ENCODE measurements at regions of chr10 and their contacts with region 1.

Region 1: GRCh38 chr10:490891-491581 is 198.4 kb downstream of the DIP2C start:
- DNase-seq: no peak
- H3K4me3 ChIP-seq: no peak overlapping the region
- H3K27ac ChIP-seq: peak overlapping the region; percentile 46 to 48
- H3K4me1 ChIP-seq: no peaks in the 10 kb centered on the region
- H3K27me3 ChIP-seq: no peaks in the 10 kb centered on the region
- CTCF ChIP-seq: no peak
- POLR2A ChIP-seq: no peak

Region 2: DNA sequence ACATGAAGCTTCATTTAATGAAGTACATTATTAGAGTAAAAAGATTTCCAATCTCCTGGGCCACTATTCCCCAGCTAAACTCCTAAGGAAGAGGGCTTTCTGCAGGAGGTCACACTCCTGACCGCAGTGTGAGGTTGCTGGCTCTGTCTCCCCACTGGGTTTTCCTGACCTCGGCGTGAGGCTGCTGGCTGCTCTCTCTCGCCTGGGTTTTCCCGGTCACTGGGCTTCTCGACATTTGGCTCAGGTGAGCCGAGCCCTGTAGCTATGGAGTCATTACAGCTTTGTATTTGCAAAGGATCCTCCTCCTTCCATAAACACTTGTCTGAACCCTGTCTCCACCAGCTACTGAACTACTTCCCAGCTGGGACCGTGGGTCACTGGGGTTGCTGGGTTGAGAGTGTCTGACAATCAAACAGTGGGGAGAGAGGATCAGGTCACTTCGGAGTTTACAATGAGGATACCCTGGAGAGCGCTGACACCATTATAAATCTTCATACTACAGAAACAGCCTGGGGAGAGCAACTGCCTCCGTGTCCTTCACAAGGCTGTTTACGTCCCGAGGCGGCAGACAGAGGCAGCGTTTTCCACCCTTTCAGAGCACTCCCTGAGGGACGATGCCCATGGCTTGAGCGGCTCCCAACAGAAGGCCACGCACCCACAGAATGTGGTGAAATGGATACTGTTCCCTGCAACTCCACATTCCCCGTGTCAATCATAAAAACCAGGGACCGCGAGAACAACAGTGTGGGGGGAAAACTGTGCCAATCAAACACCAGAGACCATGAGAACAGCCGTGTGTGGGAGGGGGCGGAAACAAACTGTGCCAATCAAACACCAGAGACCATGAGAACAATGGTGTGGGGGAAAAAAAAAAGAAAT is 129.6 kb before region 1 on chr10:
- intact Hi-C with region 1: loop called (anchors 5 kb)
- DNase-seq: no peak
- H3K4me3 ChIP-seq: no peak overlapping the region
- H3K27ac ChIP-seq: no peak overlapping the region
- H3K4me1 ChIP-seq: no peaks in the 10 kb centered on the region
- H3K27me3 ChIP-seq: no peaks in the 10 kb centered on the region
- CTCF ChIP-seq: no peak
- POLR2A ChIP-seq: no peak

Region 3: DNA sequence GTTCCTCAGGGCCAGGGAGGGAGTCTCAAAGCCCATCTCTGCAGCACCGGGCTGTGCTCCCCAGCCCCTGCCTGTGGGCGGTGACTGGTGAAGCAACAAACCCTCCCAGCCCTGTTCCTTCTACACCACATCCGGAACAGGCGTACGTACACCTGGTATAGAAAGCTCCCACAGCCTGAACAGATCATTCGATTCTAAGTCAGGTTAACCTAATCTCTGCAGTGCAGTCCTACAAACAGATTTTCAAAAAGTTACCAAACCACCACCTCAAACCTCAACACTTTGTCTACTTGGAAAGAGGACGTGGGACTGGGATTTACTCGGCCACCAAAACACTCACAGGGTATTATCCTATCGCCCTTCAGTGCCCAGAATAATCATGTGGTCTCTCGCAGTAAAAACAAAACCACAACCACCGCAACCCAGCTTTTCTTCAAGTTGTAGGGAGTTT is 40.0 kb before region 1 on chr10:
- intact Hi-C with region 1: no loop called
- DNase-seq: no peak
- H3K4me3 ChIP-seq: no peak overlapping the region
- H3K27ac ChIP-seq: no peak overlapping the region
- H3K4me1 ChIP-seq: peaks cover 3% of the 10 kb centered on the region
- H3K27me3 ChIP-seq: no peaks in the 10 kb centered on the region
- CTCF ChIP-seq: no peak
- POLR2A ChIP-seq: no peak

Measured in prostate gland (tissue), 2 donors.